Common myeloid progenitor, CD34-positive (primary cell): ENCODE measurements at regions of chr11 and their contacts with region 1.

Region 1: DNA sequence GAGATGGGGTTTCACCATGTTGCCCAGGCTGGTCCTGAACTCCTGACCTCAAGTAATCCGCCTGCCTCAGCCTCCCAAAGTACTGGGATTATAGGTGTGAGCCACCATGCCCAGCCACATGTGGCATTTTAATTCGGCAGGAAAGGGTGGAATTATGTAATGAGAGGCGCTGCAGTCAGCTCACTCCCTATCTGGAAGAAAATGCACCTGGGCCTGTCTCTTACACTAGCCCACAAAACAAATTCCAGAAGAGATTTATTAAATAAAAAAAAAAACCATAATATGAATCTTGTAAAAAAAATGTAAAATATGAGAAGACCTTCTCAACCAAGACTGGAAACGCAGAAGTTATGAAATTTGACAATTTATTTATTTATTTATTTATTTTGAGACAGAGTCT is 8.2 kb upstream of the KAT5 start:
- DNase-seq: no peak
- H3K4me3 ChIP-seq: no peak overlapping the region
- H3K27ac ChIP-seq: no peak overlapping the region
- H3K4me1 ChIP-seq: peaks cover 0 to 3% (median 1%) of the 10 kb centered on the region in 4 experiments
- H3K27me3 ChIP-seq: no peaks in the 10 kb centered on the region

Region 2: DNA sequence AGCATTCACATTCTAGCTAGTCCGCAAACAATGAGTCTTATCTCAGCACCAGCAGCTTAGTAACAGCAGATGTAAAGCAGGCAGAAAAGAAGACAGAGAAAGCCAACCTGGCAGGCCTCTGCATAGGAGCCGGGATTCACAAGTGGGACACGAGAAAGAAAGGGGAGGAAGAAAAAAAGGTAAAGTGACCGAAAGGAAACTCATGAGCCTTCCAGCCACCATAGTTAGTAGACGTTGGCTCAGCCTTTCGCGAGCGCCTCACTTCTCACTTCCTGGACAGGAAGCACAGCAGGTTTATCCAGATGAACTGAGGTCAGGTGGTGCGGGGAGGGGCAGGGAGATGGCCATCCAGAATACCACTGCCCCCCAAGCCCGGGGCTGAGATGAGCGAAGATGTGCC is 11.5 kb before region 1 on chr11:
- CTCF ChIA-PET with region 1: interaction called, 14 read pairs
- POLR2A ChIA-PET with region 1: no interaction called
- DNase-seq: peak in 1 of 3 donors; percentile 32
- H3K4me3 ChIP-seq: no peak overlapping the region
- H3K27ac ChIP-seq: no peak overlapping the region
- H3K4me1 ChIP-seq: peaks cover 0 to 3% (median 0%) of the 10 kb centered on the region in 4 experiments
- H3K27me3 ChIP-seq: no peaks in the 10 kb centered on the region

Region 3: DNA sequence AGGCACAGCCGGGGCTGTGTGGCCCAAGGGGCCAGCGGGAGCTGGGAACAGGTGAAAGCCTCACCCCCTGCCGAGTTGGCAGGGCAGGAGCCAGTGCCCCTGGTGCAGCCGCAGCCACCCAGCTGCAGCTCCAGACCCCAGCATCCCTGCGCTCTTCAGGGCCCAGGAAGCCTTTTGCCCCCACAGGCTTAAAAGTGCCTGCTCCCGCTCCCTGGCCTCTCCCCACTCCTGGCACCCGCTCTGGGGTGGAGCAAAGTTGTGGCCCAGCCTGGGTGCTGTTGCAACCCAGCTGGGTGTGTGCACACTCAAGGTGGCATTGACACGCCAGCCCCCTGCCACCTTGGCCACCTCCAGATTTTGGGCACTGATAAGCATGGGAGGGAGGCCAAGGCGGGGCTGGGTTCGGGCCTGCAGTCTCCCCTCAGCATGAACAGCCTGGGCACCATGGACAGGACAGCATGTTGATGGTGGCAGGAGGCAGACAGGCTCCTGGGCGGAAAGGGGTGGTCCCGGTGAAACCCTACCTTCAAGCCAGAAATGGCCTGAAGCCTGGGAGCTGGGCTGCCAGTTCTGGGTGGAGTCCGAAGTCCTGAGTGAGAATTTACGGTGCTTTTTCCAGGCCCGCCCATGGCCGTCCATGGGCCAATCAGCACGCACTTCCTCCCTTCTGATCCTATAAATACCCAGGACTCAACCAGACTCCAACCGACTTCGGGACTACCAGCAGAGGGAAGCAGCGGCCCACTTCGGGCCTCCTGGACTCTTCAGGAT is 40.3 kb after region 1 on chr11:
- CTCF ChIA-PET with region 1: no interaction called
- POLR2A ChIA-PET with region 1: no interaction called
- DNase-seq: peak; percentile 6 to 23 (median 21)
- H3K4me3 ChIP-seq: no peak overlapping the region
- H3K27ac ChIP-seq: no peak overlapping the region
- H3K4me1 ChIP-seq: no peaks in the 10 kb centered on the region
- H3K27me3 ChIP-seq: peaks cover 3 to 7% (median 5%) of the 10 kb centered on the region in 5 experiments

Region 4: GRCh38 chr11:65811764-65812497 is 108.1 kb after region 1 on chr11:
- CTCF ChIA-PET with region 1: no interaction called
- POLR2A ChIA-PET with region 1: no interaction called
- DNase-seq: no peak
- H3K4me3 ChIP-seq: no peak overlapping the region
- H3K27ac ChIP-seq: no peak overlapping the region
- H3K4me1 ChIP-seq: peaks cover 0 to 3% (median 1%) of the 10 kb centered on the region in 4 experiments
- H3K27me3 ChIP-seq: peaks cover 0 to 4% (median 0%) of the 10 kb centered on the region in 5 experiments